ENCODE measurements at regions of chr1 and their contacts with region 1.

Region 1: GRCh38 chr1:28775121-28775944 is 36.6 kb upstream of the OPRD1 start:
- DNase-seq: peak; percentile 73 to 90 (median 89)
- H3K4me3 ChIP-seq: peak overlapping the region; percentile 21 to 72 (median 62)
- H3K27ac ChIP-seq: no peak overlapping the region
- H3K4me1 ChIP-seq: peaks cover 0 to 14% (median 10%) of the 10 kb centered on the region in 4 experiments
- H3K27me3 ChIP-seq: no peaks in the 10 kb centered on the region

Region 2: DNA sequence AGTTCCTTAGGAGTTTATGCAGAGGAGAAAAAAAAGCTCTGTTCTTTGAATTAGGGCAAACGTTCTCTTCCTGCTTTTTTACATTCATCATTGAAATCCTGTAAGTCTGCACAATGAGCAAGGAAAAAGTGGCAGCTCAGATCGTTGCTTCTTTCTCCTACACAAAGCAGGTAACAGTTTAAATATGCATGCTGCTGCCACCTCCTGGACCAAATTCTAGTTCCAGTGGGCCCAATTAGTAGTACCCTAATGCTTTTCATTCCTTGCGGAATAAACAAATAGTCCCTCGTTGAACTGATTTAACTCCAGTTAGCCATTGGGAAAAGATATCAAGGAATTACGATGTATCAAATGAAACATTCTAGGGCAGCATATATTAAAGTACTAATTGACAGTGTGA is 18.5 kb before region 1 on chr1:
- CTCF ChIA-PET with region 1: interaction called, 11 read pairs
- POLR2A ChIA-PET with region 1: no interaction called
- DNase-seq: peak; percentile 28 to 34 (median 33)
- H3K4me3 ChIP-seq: no peak overlapping the region
- H3K27ac ChIP-seq: no peak overlapping the region
- H3K4me1 ChIP-seq: peaks cover 0 to 12% (median 1%) of the 10 kb centered on the region in 4 experiments
- H3K27me3 ChIP-seq: no peaks in the 10 kb centered on the region

Region 3: GRCh38 chr1:28811766-28812668 is 36.7 kb after region 1 on chr1 and contains the start of gene OPRD1:
- CTCF ChIA-PET with region 1: no interaction called
- POLR2A ChIA-PET with region 1: no interaction called
- DNase-seq: peak in 2 of 3 donors; percentile 14 to 34
- H3K4me3 ChIP-seq: peak within 1 kb of the TSS in 2 of 7 experiments; percentile 10 to 36
- H3K27ac ChIP-seq: no peak within 1 kb of the TSS
- H3K4me1 ChIP-seq: peaks cover 0 to 23% (median 18%) of the 10 kb centered on the region in 4 experiments
- H3K27me3 ChIP-seq: peaks cover 5 to 75% (median 41%) of the 10 kb centered on the region in 5 experiments